Activated CD8-positive, alpha-beta memory T cell treated with anti-CD3 and anti-CD28 coated beads, Interleukin-2, amount 10 ng/mL, durations not matched to agents 7 days and 5 days (primary cell): ENCODE measurements at regions of chr1 and their contacts with region 1.

Region 1: GRCh38 chr1:155978325-155978972 is at the start of gene ARHGEF2:
- DNase-seq: peak; percentile 91
- ATAC-seq: peak; percentile 80
- H3K4me3 Mint-ChIP-seq: peak within 1 kb of the TSS; percentile 98
- H3K27ac Mint-ChIP-seq: peak within 1 kb of the TSS; percentile 92
- H3K4me1 Mint-ChIP-seq: peaks cover 62% of the 10 kb centered on the region
- H3K27me3 Mint-ChIP-seq: no peaks in the 10 kb centered on the region
- total RNA-seq, gene ARHGEF2: 159 to 161 TPM

Region 2: DNA sequence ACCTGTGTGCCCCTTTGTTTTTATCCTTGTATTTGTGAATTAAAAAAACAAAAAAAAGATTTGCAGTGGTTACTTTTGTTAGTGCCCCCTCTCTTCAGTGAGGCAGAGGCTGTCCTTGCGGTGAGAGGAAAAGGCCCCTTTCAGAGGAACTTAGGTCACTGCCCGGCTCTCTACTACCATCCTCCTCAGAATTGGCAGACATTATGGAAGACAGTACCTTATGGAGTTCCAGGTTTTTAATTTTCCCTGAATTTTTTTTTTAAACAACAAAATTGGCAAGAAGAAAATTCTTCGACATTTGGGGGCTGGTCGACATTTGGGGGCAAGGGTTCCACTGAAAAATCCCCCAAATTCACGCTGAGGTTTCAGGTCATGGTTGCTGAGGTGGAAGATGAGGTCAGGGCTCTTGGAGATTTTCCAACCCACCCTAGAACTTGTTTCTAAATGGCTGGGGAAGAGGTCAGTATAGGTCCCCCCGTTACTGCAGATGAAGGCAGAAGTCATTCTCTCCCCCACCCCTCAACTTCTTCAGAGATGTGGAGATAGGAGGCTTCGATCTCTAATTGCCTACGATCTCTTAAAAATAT is 31.7 kb before region 1 on chr1:
- CTCF ChIA-PET with region 1: interaction called, 35 read pairs
- DNase-seq: no peak
- ATAC-seq: peak; percentile 17
- H3K4me3 Mint-ChIP-seq: peak overlapping the region; percentile 31
- H3K27ac Mint-ChIP-seq: peak overlapping the region; percentile 82
- H3K4me1 Mint-ChIP-seq: peaks cover 46% of the 10 kb centered on the region
- H3K27me3 Mint-ChIP-seq: no peaks in the 10 kb centered on the region

Region 3: DNA sequence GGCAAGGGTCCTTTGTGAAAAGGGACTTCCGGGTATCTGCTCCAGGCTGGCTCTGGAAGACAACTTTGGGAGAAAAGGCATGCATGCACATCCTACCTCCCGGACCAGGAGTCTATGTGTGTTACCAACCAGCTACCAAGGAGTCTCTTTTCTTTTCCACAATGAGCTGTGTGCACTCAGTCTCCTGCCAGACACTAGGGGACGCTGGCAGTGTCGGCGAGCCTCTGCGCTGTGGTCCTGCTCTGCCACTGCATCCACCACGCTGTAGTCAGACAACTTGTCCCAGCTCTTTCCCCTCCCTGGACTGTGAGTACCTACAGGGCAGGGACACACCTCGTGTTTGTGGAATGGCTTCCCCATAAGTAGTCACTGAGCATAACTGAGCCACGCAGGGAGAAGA is 47.4 kb after region 1 on chr1:
- CTCF ChIA-PET with region 1: no interaction called
- DNase-seq: peak; percentile 69
- ATAC-seq: peak; percentile 85
- H3K4me3 Mint-ChIP-seq: no peak overlapping the region
- H3K27ac Mint-ChIP-seq: no peak overlapping the region
- H3K4me1 Mint-ChIP-seq: peaks cover 16% of the 10 kb centered on the region
- H3K27me3 Mint-ChIP-seq: peaks cover 4% of the 10 kb centered on the region

Region 4: GRCh38 chr1:156082309-156083091 is 104.1 kb after region 1 on chr1 and contains the start of gene MEX3A:
- CTCF ChIA-PET with region 1: no interaction called
- DNase-seq: peak; percentile 72
- ATAC-seq: peak; percentile 90
- H3K4me3 Mint-ChIP-seq: peak within 1 kb of the TSS; percentile 71
- H3K27ac Mint-ChIP-seq: no peak within 1 kb of the TSS
- H3K4me1 Mint-ChIP-seq: peaks cover 6% of the 10 kb centered on the region
- H3K27me3 Mint-ChIP-seq: peaks cover 65% of the 10 kb centered on the region
- total RNA-seq, gene MEX3A: 0.06 to 0.56 TPM